ENCODE measurements at regions of chr3 and their contacts with region 1.

Region 1: DNA sequence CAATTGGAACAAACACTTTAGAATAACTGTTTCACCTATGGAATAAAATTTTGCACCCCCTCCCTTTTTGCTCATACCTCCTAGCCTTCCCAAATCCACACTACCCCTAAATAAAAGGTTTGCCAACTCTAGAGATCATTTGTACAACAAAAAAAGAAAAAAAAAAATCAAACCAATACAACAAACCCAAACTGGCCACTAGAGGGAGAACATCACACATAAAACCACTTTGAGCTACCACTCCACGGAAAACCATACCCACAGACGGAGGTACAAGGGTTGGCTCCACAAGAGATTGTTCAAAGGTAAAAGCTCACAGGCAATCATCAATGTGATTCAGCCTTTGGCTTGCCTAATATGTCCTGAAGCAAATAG is 47.6 kb downstream of the SETMAR start:
- DNase-seq: no peak
- H3K4me3 ChIP-seq: no peak overlapping the region
- H3K27me3 ChIP-seq: no peaks in the 10 kb centered on the region
- CTCF ChIP-seq: peak; percentile 70

Region 2: GRCh38 chr3:4334548-4334947 is 16.2 kb before region 1 on chr3:
- CTCF ChIA-PET with region 1: interaction called, 19 read pairs
- POLR2A ChIA-PET with region 1: no interaction called
- DNase-seq: no peak
- H3K4me3 ChIP-seq: no peak overlapping the region
- H3K27me3 ChIP-seq: no peaks in the 10 kb centered on the region; the same call in 1 of the 2 replicates
- CTCF ChIP-seq: no peak

Region 3: GRCh38 chr3:4340411-4341335 is 10.1 kb before region 1 on chr3:
- CTCF ChIA-PET with region 1: interaction called, 23 read pairs
- POLR2A ChIA-PET with region 1: no interaction called
- DNase-seq: no peak
- H3K4me3 ChIP-seq: no peak overlapping the region
- H3K27me3 ChIP-seq: no peaks in the 10 kb centered on the region
- CTCF ChIP-seq: no peak

Region 4: DNA sequence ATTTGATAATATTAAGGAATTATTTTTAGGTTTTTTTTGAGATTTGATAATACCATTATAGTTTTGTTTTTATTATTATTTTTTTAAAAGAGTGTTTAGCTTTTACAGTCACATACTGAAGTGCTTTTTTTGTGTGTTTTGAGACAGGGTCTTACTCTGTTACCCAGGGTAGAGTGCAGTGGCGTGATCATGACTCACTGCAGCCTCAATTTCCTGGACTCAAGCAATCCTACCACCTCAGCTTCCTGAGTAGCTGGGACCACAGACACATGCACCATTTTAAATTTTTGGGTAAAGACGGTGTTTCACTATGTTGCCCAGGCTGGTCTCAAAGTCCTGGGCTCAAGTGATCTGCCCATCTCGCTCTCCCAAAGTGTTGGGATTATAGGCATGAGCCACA is 43.3 kb after region 1 on chr3:
- CTCF ChIA-PET with region 1: no interaction called
- POLR2A ChIA-PET with region 1: no interaction called
- DNase-seq: no peak
- H3K4me3 ChIP-seq: no peak overlapping the region
- H3K27me3 ChIP-seq: no peaks in the 10 kb centered on the region
- CTCF ChIP-seq: no peak

Measured in BJ (cell line).